Dendritic cell treated with granulocyte-macrophage colony-stimulating factor and Interleukin-4, amounts not matched to agents 40 ng/mL and 50 ng/mL, for 4 days (primary cell): ENCODE measurements at regions of chr17 and their contacts with region 1.

Region 1: GRCh38 chr17:51298508-51299371 is 38.4 kb downstream of the UTP18 start:
- H3K4me3 Mint-ChIP-seq: no peak overlapping the region
- H3K27ac Mint-ChIP-seq: no peak overlapping the region
- H3K4me1 Mint-ChIP-seq: peaks cover 5% of the 10 kb centered on the region
- H3K27me3 Mint-ChIP-seq: no peaks in the 10 kb centered on the region

Region 2: DNA sequence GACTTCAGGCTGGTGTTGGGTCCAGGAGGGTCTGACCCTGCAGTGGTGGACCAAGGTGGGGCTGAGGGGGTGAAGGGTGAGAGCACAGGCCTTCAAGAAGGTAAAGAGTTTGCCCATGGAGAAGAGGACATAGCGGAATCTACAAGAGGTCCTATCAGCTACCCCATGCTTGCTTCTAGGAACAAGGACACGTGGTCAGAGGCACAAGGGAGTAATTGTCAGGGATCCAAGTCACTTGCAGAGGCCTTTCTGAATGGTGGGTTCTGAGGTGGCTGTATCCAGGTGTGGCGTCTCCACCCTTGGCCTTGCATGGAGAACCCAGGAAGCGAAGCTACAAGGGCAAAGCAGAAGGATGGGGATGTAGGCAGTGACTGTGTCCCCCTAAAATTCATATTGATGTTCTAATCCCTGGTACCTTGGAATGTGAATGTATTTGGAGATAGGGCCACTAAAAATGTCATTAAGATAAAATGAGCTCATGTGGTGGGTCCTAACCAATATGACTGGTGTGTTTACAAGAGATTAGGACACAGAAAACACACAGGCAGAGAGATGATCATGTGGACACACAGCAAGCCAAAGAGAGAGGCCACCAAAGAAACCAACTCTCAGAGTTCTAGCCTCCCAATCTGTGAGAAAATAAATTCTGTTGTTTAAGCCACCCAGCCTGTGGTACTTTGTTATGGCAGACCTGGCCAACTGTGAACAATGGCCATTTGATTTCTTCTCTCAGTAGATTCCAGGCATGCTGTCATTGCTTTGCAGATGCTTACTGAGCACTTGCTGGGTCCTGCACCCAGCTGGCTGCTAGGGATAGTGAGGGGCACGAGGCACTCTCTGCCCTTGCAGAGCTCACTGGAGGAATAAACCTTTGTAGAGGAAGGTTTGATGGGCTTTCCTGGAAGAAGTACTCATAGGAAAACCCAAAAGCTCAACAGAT is 37.4 kb after region 1 on chr17:
- intact Hi-C with region 1: no loop called
- H3K4me3 Mint-ChIP-seq: no peak overlapping the region
- H3K27ac Mint-ChIP-seq: no peak overlapping the region
- H3K4me1 Mint-ChIP-seq: no peaks in the 10 kb centered on the region
- H3K27me3 Mint-ChIP-seq: peaks cover 8% of the 10 kb centered on the region

Region 3: DNA sequence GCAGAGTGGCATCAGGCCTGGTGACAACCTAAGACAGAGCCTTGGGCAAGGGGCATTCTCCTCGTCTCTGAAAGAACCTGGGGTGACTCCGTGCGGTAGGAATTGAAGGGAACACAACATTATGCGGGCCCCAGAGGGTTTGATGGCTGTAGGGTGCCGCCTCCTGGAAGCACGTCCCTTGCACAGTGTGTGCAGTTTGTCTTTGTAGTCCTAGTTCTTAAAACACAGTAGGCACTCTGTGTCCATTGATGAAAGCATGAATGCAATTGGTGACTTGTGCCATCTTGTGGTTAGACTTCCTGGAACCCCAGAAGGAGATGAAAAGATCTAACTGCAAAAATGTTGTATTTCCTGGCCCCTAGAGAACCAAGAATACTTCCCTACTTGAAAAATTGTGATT is 241.4 kb after region 1 on chr17:
- intact Hi-C with region 1: loop called (anchors 1 kb)
- H3K4me3 Mint-ChIP-seq: no peak overlapping the region
- H3K27ac Mint-ChIP-seq: no peak overlapping the region
- H3K4me1 Mint-ChIP-seq: no peaks in the 10 kb centered on the region
- H3K27me3 Mint-ChIP-seq: no peaks in the 10 kb centered on the region